B cell (primary cell): ENCODE measurements at regions of chr5 and their contacts with region 1.

Region 1: GRCh38 chr5:98928873-98929696 is at the start of gene CHD1:
- DNase-seq: peak; percentile 98
- ATAC-seq: peak; percentile 62
- H3K4me3 ChIP-seq: peak within 1 kb of the TSS; percentile 92 to 99 (median 97)
- H3K4me3 Mint-ChIP-seq: peak within 1 kb of the TSS; percentile 98
- H3K27ac ChIP-seq: peak within 1 kb of the TSS; percentile 99 to 100
- H3K27ac Mint-ChIP-seq: peak within 1 kb of the TSS; percentile 100
- H3K4me1 ChIP-seq: peaks cover 39 to 49% of the 10 kb centered on the region in 2 donors
- H3K4me1 Mint-ChIP-seq: peaks cover 66% of the 10 kb centered on the region
- H3K27me3 ChIP-seq: no peaks in the 10 kb centered on the region
- H3K27me3 Mint-ChIP-seq: no peaks in the 10 kb centered on the region
- CTCF ChIP-seq: no peak
- total RNA-seq, gene CHD1: 91.4 and 96.1 TPM in 2 replicates

Region 2: DNA sequence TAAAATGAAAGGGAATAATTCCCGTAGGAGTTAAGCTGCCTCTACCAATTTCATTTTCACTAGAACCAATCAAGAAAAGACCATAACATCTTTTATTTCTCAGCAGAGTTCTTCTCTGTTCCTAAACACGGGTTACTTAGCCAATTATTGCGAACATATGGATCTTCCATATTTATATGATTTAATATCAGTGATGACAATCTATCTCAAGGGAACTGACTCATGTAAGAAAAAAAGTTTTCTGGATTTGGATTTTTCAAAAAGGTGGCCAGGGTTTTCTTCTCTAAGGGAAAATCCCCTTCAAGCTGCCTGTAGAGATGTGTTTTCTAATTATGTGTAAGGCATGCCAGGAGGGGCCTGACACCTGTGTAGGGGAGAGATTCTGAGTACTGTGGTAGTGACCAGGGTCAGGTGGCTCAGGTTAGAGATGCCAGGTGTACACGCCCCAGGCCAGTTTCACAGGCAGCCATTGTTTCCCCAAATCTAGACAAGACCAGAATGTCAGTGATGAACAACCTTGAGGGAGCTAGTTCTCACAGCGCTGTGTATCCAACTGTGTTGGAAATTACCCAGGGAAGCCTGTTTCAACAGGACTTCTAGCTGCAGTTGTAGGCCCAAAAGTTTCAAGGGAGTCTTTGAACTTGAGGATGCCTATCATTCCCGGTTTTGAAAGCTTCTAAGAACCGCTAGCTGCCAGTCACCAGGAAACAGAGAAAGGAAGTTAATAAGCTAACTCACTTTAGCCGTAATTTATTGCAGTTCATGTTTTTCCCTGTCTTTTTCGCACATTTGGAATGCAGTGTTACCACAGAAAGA is 728.2 kb before region 1 on chr5:
- CTCF ChIA-PET with region 1: no interaction called
- POLR2A ChIA-PET with region 1: no interaction called
- intact Hi-C with region 1: no loop called
- DNase-seq: no peak
- ATAC-seq: no peak
- H3K4me3 ChIP-seq: no peak overlapping the region
- H3K4me3 Mint-ChIP-seq: no peak overlapping the region
- H3K27ac ChIP-seq: no peak overlapping the region
- H3K27ac Mint-ChIP-seq: no peak overlapping the region
- H3K4me1 ChIP-seq: no peaks in the 10 kb centered on the region
- H3K4me1 Mint-ChIP-seq: no peaks in the 10 kb centered on the region
- H3K27me3 ChIP-seq: no peaks in the 10 kb centered on the region
- H3K27me3 Mint-ChIP-seq: no peaks in the 10 kb centered on the region
- CTCF ChIP-seq: no peak

Region 3: DNA sequence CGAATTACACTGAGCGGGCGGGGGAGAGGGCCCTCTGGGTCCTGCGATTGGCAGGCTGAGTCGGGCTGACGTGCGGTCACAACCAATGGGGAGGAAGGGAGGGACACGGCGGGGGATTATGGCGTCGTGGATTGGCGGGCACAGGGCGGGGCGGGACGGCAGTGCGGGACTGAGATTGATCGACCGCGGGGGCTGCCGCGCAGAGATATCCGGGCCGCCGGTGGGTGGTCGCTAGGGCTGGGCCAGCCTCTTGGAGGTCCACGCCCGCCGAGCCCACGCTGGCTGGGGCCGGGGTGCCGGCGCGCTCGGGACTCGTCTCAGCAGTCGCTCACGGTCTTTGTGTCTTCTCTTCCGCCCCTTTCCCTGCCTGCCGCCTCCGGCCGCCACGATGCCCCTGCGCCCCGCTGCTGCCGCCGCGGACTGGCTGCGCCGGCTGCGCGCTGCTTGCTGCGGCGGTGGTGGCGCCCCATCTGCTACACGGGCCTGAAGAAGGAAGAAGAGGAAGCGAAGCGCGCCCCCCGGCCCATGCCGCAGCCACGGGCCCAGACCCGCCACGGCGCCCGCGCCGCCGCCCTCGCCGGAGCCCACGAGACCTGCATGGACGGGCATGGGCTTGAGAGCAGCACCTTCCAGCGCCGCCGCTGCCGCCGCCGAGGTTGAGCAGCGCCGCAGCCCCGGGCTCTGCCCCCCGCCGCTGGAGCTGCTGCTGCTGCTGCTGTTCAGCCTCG is 155.5 kb before region 1 on chr5 and contains the start of gene RGMB:
- CTCF ChIA-PET with region 1: interaction called, 6 read pairs
- POLR2A ChIA-PET with region 1: no interaction called
- intact Hi-C with region 1: loop called (anchors 1 kb)
- DNase-seq: peak; percentile 96
- ATAC-seq: peak; percentile 88
- H3K4me3 ChIP-seq: peak within 1 kb of the TSS; percentile 55 to 94 (median 78)
- H3K4me3 Mint-ChIP-seq: peak within 1 kb of the TSS; percentile 96
- H3K27ac ChIP-seq: peak within 1 kb of the TSS; percentile 63 to 78
- H3K27ac Mint-ChIP-seq: peak within 1 kb of the TSS; percentile 93
- H3K4me1 ChIP-seq: peaks cover 38 to 53% of the 10 kb centered on the region in 2 donors
- H3K4me1 Mint-ChIP-seq: peaks cover 56% of the 10 kb centered on the region
- H3K27me3 ChIP-seq: peaks cover 0 to 17% (median 8%) of the 10 kb centered on the region in 4 experiments
- H3K27me3 Mint-ChIP-seq: peaks cover under 1% of the 10 kb centered on the region
- CTCF ChIP-seq: no peak
- total RNA-seq, gene RGMB: 17.1 and 18.3 TPM in 2 replicates

Region 4: DNA sequence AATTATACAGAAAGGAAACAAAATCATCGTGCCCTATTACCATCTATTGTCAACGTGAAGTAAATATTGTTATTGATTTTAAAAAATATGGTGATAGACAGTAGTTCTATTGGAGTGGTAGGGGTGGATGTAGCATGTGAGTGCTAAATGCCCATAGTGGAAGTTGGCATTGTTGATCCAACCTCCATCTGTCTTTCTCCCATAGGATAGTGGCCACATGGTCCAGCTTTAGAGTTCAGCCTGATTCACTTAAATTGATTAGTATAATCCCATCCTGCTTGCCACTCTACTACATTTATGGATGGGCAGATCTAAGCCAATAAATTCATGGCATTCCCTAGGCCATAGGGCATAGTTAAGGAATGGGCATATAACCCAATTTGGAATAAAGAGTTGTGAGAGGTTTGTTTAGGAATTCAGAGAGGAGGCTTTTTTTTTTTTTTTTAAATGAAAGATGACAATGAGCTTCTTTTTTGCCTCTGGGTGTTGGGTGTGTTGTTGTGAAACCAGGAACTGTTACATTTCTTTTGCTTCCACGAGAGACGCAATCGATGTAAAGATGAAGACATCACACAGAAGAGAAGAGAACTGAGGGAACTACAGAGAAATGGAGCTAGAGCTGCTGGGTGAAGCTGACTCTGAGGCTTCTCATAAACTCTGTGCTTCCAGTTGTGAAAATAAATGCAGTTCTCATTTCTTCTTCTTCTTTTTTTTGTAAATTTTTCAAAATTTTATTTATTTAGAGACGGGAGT is 12.2 kb after region 1 on chr5:
- CTCF ChIA-PET with region 1: no interaction called
- POLR2A ChIA-PET with region 1: no interaction called
- intact Hi-C with region 1: loop called (anchors 2 kb)
- DNase-seq: no peak
- ATAC-seq: no peak
- H3K4me3 ChIP-seq: no peak overlapping the region
- H3K4me3 Mint-ChIP-seq: no peak overlapping the region
- H3K27ac ChIP-seq: no peak overlapping the region
- H3K27ac Mint-ChIP-seq: no peak overlapping the region
- H3K4me1 ChIP-seq: no peaks in the 10 kb centered on the region
- H3K4me1 Mint-ChIP-seq: peaks cover 20% of the 10 kb centered on the region
- H3K27me3 ChIP-seq: no peaks in the 10 kb centered on the region
- H3K27me3 Mint-ChIP-seq: no peaks in the 10 kb centered on the region
- CTCF ChIP-seq: no peak

Region 5: GRCh38 chr5:99004960-99005359 is 75.9 kb after region 1 on chr5:
- CTCF ChIA-PET with region 1: interaction called, 9 read pairs
- POLR2A ChIA-PET with region 1: interaction called, 7 read pairs
- intact Hi-C with region 1: loop called (anchors 2 kb)
- DNase-seq: peak; percentile 86
- ATAC-seq: peak; percentile 99
- H3K4me3 ChIP-seq: no peak overlapping the region
- H3K4me3 Mint-ChIP-seq: peak overlapping the region; percentile 42
- H3K27ac ChIP-seq: no peak overlapping the region
- H3K27ac Mint-ChIP-seq: peak overlapping the region; percentile 80
- H3K4me1 ChIP-seq: peaks cover 15 to 22% of the 10 kb centered on the region in 2 donors
- H3K4me1 Mint-ChIP-seq: peaks cover 29% of the 10 kb centered on the region
- H3K27me3 ChIP-seq: no peaks in the 10 kb centered on the region
- H3K27me3 Mint-ChIP-seq: no peaks in the 10 kb centered on the region
- CTCF ChIP-seq: no peak

Region 6: GRCh38 chr5:99060306-99061261 is 131.5 kb after region 1 on chr5:
- CTCF ChIA-PET with region 1: interaction called, 16 read pairs
- POLR2A ChIA-PET with region 1: interaction called, 11 read pairs
- intact Hi-C with region 1: loop called (anchors 1 kb)
- DNase-seq: peak; percentile 89
- ATAC-seq: peak; percentile 66
- H3K4me3 ChIP-seq: peak overlapping the region in 3 of 5 experiments; percentile 18 to 47 (median 25)
- H3K4me3 Mint-ChIP-seq: peak overlapping the region; percentile 74
- H3K27ac ChIP-seq: peak overlapping the region; percentile 22 to 56
- H3K27ac Mint-ChIP-seq: peak overlapping the region; percentile 73
- H3K4me1 ChIP-seq: peaks cover 24 to 41% of the 10 kb centered on the region in 2 donors
- H3K4me1 Mint-ChIP-seq: peaks cover 40% of the 10 kb centered on the region
- H3K27me3 ChIP-seq: no peaks in the 10 kb centered on the region
- H3K27me3 Mint-ChIP-seq: no peaks in the 10 kb centered on the region
- CTCF ChIP-seq: peak; percentile 89